ENCODE measurements at regions of chr1 and their contacts with region 1.

Region 1: GRCh38 chr1:184881941-184882913 is 92.1 kb downstream of the NIBAN1 start:
- DNase-seq: no peak
- H3K4me3 Mint-ChIP-seq: peak overlapping the region; percentile 1
- H3K27ac Mint-ChIP-seq: peak overlapping the region; percentile 90
- H3K4me1 Mint-ChIP-seq: peaks cover 31% of the 10 kb centered on the region
- H3K27me3 Mint-ChIP-seq: peaks cover 5% of the 10 kb centered on the region

Region 2: GRCh38 chr1:184494929-184495328 is 387.3 kb before region 1 on chr1:
- intact Hi-C with region 1: loop called (anchors 5 kb)
- DNase-seq: no peak
- H3K4me3 Mint-ChIP-seq: no peak overlapping the region
- H3K27ac Mint-ChIP-seq: no peak overlapping the region
- H3K4me1 Mint-ChIP-seq: peaks cover 30% of the 10 kb centered on the region
- H3K27me3 Mint-ChIP-seq: no peaks in the 10 kb centered on the region

Measured in activated T-helper 2 cell treated with anti-CD3 and anti-CD28 coated beads, Interferon-gamma antibody, Interleukin-2, Interleukin-4, amounts not matched to agents 10 μg/mL and 5 μg/mL and 100 μg/mL, durations not matched to agents 14 hours and 24 hours and 36 hours (primary cell).